Activated CD4-positive, alpha-beta memory T cell treated with anti-CD3 and anti-CD28 coated beads for 36 hours (primary cell): ENCODE measurements at regions of chr5 and their contacts with region 1.

Region 1: GRCh38 chr5:151080623-151081430 is at the start of gene TNIP1:
- DNase-seq: peak; percentile 96
- H3K4me3 Mint-ChIP-seq: peak within 1 kb of the TSS; percentile 89
- H3K27ac Mint-ChIP-seq: peak within 1 kb of the TSS; percentile 94
- H3K4me1 Mint-ChIP-seq: peaks cover 69% of the 10 kb centered on the region
- H3K27me3 Mint-ChIP-seq: no peaks in the 10 kb centered on the region
- total RNA-seq, gene TNIP1: 388 to 401 TPM

Region 2: GRCh38 chr5:150700594-150701293 is 380.1 kb before region 1 on chr5 and contains the start of gene RBM22:
- CTCF ChIA-PET with region 1: no interaction called
- POLR2A ChIA-PET with region 1: no interaction called
- intact Hi-C with region 1: loop called (anchors 5 kb)
- DNase-seq: peak; percentile 95
- H3K4me3 Mint-ChIP-seq: no peak within 1 kb of the TSS
- H3K27ac Mint-ChIP-seq: no peak within 1 kb of the TSS
- H3K4me1 Mint-ChIP-seq: peaks cover 7% of the 10 kb centered on the region
- H3K27me3 Mint-ChIP-seq: no peaks in the 10 kb centered on the region
- total RNA-seq, gene RBM22: 59.6 to 66.4 TPM

Region 3: DNA sequence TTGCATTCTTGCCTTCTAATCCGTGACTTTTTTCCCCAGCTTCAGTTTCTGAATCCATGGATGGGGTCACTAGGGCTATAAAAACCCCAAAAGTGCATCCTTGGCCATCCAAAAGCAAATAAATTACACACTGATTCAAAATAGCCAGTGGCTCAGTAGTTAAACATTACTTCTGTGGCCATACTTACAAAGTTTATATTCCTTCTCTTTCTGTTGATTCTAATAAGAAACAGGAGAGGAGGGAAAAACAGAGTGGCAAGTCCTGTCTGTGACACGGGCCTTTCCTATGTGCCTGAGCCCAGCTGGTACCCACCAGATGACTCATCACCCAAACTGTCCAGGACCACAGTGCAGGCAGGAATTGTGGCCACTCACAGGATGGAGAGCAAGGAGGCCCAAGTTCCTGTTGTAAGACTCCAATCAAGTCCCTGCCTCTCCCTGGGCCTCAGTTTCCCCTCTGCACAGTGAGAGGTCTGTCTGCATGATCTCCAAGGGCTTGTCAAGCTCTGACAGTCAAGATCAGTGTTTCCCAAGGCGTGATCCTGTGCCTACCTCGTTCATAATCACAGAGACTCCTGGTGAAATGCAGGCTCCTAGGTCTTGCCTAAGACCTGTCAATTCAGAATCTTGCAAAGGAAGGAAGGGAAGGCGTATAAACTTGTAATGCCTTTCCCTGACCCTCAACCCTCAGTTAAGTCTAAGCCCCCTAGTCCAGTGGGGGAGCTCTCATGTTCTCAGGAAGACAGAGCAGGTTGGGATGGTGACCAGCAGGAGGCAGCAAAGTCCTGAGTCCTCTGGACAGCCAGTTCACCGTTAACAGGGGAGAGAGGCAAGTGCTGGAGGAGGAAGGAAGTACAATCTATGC is 29.5 kb before region 1 on chr5:
- CTCF ChIA-PET with region 1: interaction called, 16 read pairs
- POLR2A ChIA-PET with region 1: interaction called, 3 read pairs
- intact Hi-C with region 1: no loop called
- DNase-seq: peak; percentile 79
- H3K4me3 Mint-ChIP-seq: no peak overlapping the region
- H3K27ac Mint-ChIP-seq: peak overlapping the region; percentile 67
- H3K4me1 Mint-ChIP-seq: peaks cover 15% of the 10 kb centered on the region
- H3K27me3 Mint-ChIP-seq: no peaks in the 10 kb centered on the region

Region 4: GRCh38 chr5:151068433-151069197 is 12.2 kb before region 1 on chr5:
- CTCF ChIA-PET with region 1: interaction called, 3 read pairs
- POLR2A ChIA-PET with region 1: interaction called, 115 read pairs
- intact Hi-C with region 1: loop called (anchors 1 kb)
- DNase-seq: peak; percentile 80
- H3K4me3 Mint-ChIP-seq: peak overlapping the region; percentile 60
- H3K27ac Mint-ChIP-seq: peak overlapping the region; percentile 94
- H3K4me1 Mint-ChIP-seq: peaks cover 98% of the 10 kb centered on the region
- H3K27me3 Mint-ChIP-seq: no peaks in the 10 kb centered on the region

Region 5: DNA sequence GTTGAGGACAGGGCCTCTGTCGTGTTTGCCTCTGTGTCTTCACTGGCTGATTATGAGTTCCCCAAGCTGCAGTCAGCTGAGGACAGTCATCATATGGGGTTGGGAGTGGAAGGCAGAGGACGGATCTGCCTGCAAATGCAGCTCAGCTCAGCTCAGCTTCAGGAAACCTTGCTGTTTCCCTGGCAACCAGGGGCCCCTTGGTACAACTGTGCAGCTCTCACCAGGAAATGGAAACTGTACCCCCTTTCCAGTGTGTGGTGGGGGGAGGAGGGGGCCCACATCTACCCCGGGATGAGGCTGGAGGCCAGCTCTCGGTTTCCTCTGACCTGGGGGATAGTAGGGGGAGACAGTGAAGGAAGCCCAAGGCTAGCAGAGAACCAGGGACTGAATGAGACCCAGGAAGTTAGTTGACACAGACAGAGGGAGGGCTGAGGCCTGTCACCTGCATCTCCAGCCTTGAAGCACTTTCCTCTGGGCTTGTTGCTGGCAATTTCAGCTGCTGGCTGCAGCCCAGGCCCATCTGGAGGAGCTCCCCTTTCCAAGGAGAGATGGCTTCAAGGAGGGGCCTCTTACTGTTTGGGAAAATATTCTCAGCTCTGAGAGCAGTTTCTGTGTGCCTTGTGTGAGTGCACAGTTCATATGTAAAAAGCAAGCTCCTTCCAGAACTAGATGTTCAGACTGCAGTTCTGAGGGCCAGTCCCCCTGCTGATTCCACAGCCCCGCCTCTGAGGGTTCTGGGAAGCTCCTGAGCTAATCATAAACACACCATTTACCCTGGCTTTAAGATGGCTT is 69.8 kb after region 1 on chr5:
- CTCF ChIA-PET with region 1: interaction called, 3 read pairs
- POLR2A ChIA-PET with region 1: interaction called, 12 read pairs
- intact Hi-C with region 1: loop called (anchors 1 kb)
- DNase-seq: peak; percentile 87
- H3K4me3 Mint-ChIP-seq: peak overlapping the region; percentile 36
- H3K27ac Mint-ChIP-seq: peak overlapping the region; percentile 90
- H3K4me1 Mint-ChIP-seq: peaks cover 94% of the 10 kb centered on the region
- H3K27me3 Mint-ChIP-seq: no peaks in the 10 kb centered on the region

Region 6: DNA sequence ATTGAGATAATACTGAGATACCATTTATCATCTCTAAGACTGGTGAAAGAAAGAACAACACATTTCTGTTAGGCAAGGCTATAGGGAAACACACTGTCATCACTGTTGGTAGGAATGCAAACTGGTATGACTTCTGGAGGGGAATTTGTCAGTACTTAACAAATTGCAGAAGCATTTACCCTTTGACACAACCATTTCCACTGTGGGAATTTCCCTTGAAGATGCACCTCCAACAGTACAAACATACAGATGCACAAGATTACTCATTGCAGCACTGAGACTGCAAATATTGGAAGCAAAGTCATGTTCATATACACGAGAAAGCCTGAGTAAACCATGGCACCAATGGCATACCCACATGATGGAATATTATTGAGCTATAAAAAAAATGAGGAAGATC is 189.8 kb after region 1 on chr5:
- CTCF ChIA-PET with region 1: no interaction called
- POLR2A ChIA-PET with region 1: no interaction called
- intact Hi-C with region 1: loop called (anchors 1 kb)
- DNase-seq: no peak
- H3K4me3 Mint-ChIP-seq: no peak overlapping the region
- H3K27ac Mint-ChIP-seq: no peak overlapping the region
- H3K4me1 Mint-ChIP-seq: no peaks in the 10 kb centered on the region
- H3K27me3 Mint-ChIP-seq: no peaks in the 10 kb centered on the region

Region 7: DNA sequence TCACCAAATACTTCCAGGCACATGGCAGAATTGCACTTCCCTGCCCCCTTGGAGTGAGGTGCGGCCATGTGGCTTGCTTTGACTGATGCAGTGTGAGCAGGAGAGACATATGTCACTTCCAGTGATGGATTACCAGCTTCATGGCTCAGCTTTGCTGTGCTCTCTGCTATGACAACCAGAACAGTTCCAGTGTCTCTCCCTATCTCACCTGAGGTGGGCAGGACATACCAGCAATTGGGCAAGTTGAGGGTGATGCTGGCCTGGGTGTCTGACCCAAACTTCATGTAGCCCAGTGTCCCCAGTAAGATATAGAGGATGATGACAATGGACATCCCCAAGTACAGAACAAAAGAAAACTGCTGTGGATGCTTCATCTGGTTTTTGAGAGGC is 203.0 kb after region 1 on chr5:
- CTCF ChIA-PET with region 1: no interaction called
- POLR2A ChIA-PET with region 1: no interaction called
- intact Hi-C with region 1: no loop called
- DNase-seq: no peak
- H3K4me3 Mint-ChIP-seq: no peak overlapping the region
- H3K27ac Mint-ChIP-seq: no peak overlapping the region
- H3K4me1 Mint-ChIP-seq: no peaks in the 10 kb centered on the region
- H3K27me3 Mint-ChIP-seq: peaks cover 8% of the 10 kb centered on the region